ENCODE measurements at regions of chr9 and their contacts with region 1.

Region 1: GRCh38 chr9:127970401-127971313 is 10.1 kb downstream of the EEIG1 start:
- DNase-seq: peak; percentile 89
- H3K4me3 Mint-ChIP-seq: peak overlapping the region; percentile 62
- H3K27ac Mint-ChIP-seq: peak overlapping the region; percentile 88
- H3K4me1 Mint-ChIP-seq: peaks cover 97% of the 10 kb centered on the region
- H3K27me3 Mint-ChIP-seq: no peaks in the 10 kb centered on the region

Region 2: GRCh38 chr9:127916665-127917613 is 53.7 kb before region 1 on chr9 and contains the start of gene ST6GALNAC4:
- CTCF ChIA-PET with region 1: no interaction called
- POLR2A ChIA-PET with region 1: no interaction called
- intact Hi-C with region 1: no loop called
- DNase-seq: peak; percentile 98
- H3K4me3 Mint-ChIP-seq: peak within 1 kb of the TSS; percentile 77
- H3K27ac Mint-ChIP-seq: peak within 1 kb of the TSS; percentile 54
- H3K4me1 Mint-ChIP-seq: peaks cover 43% of the 10 kb centered on the region
- H3K27me3 Mint-ChIP-seq: no peaks in the 10 kb centered on the region
- total RNA-seq, gene ST6GALNAC4: 21.2 to 23.5 TPM

Region 3: DNA sequence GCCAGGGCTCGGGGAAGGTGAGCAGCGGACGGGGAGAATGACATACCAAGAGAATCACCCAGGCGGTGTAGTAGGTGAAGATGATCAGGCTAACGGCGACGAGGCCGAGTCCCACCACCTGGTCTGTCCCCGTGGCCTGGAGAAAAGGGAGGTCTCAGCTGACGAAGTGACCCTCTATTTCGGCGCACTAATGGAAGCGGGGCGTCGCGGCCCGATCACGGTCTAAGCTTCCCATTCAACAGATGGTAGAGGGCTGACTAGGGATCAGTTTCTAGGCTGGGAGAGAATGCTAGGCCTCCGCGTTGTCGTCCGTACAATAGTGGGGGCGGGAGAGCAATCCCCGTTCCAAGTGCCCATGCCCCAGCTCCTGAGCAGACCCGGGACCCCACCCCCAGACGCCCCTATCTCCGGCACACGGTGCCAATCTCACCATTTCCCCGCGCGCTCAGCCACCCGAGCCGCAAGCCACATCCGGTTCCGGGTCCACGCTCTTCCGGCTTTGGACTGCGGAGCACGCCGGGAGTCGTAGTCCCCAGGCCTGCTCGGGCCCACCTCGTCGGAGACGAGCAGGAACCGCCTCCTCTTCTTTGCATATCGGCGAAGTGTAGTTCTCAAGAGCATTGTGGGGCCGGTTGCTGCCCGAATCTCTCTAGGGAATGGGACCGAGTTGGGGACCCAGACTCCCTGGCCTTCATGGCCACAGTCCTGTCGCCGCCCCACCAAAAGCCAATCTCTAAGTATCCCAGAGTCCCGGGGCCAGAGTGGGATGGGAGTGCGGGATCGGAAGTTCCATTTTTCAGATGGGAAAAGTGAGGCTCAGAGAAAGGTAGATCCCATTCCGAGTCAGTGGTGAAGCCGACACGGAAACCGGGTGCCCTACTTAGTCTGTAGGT is 33.0 kb before region 1 on chr9 and contains the start of gene DPM2:
- CTCF ChIA-PET with region 1: interaction called, 106 read pairs
- POLR2A ChIA-PET with region 1: no interaction called
- intact Hi-C with region 1: loop called (anchors 2 kb)
- DNase-seq: peak; percentile 91
- H3K4me3 Mint-ChIP-seq: peak within 1 kb of the TSS; percentile 90
- H3K27ac Mint-ChIP-seq: peak within 1 kb of the TSS; percentile 89
- H3K4me1 Mint-ChIP-seq: peaks cover 43% of the 10 kb centered on the region
- H3K27me3 Mint-ChIP-seq: no peaks in the 10 kb centered on the region
- total RNA-seq, gene DPM2: 41.5 to 42.0 TPM

Region 4: GRCh38 chr9:127955294-127956035 is 15.2 kb before region 1 on chr9:
- CTCF ChIA-PET with region 1: interaction called, 11 read pairs
- POLR2A ChIA-PET with region 1: interaction called, 31 read pairs
- intact Hi-C with region 1: loop called (anchors 1 kb)
- DNase-seq: peak; percentile 95
- H3K4me3 Mint-ChIP-seq: peak overlapping the region; percentile 30
- H3K27ac Mint-ChIP-seq: peak overlapping the region; percentile 92
- H3K4me1 Mint-ChIP-seq: peaks cover 80% of the 10 kb centered on the region
- H3K27me3 Mint-ChIP-seq: no peaks in the 10 kb centered on the region

Region 5: DNA sequence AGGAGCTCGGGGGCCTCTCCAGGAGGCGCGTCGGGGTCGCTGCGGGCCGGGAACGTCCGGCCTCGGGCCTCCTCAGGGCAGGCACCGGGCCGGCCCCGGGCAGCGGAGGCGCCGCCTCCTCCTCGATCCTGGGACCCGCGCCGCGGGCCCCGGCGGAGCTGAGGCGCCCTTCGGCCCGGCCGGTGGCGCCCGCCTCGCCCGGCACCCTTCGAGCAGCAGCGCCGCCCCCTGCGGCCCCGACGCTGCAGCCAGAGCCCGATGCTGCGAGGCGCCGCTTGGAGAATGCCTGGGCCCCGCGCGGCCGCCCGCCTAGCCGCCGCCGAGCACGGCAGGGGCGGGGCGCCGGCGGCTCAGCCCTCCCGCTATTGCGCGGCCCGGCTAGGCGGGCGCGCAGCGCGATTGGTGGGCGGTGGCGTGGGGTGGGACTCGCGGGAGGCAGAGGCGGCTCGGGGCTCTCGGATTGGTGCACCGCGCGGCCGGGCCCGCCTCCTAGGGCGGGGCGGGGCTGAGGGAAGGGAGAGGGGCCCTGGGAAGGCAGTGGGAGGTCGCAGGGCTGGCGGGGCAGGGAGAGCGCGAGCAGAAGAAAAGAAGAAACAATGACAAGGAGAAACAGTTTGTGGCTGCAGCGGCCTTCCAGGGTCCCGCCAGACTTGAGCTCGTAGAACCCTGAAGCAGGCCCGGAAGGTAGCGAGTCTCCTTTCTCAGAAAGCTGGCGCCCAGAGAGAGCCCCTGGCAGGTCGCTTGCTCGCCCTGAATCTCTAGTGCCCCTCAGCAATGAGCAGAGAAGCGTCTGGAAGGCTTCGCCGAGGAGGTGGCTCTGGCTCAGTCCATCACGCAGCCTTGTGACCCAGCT is 10.3 kb after region 1 on chr9 and contains the start of gene EEIG1:
- CTCF ChIA-PET with region 1: interaction called, 6 read pairs
- POLR2A ChIA-PET with region 1: interaction called, 29 read pairs
- intact Hi-C with region 1: loop called (anchors 1 kb)
- DNase-seq: peak; percentile 98
- H3K4me3 Mint-ChIP-seq: peak within 1 kb of the TSS; percentile 96
- H3K27ac Mint-ChIP-seq: peak within 1 kb of the TSS; percentile 93
- H3K4me1 Mint-ChIP-seq: peaks cover 43% of the 10 kb centered on the region
- H3K27me3 Mint-ChIP-seq: no peaks in the 10 kb centered on the region
- total RNA-seq, gene EEIG1: 50.7 to 58.0 TPM

Region 6: GRCh38 chr9:127991042-127991756 is 20.5 kb after region 1 on chr9:
- CTCF ChIA-PET with region 1: no interaction called
- POLR2A ChIA-PET with region 1: no interaction called
- intact Hi-C with region 1: no loop called
- DNase-seq: no peak
- H3K4me3 Mint-ChIP-seq: no peak overlapping the region
- H3K27ac Mint-ChIP-seq: no peak overlapping the region
- H3K4me1 Mint-ChIP-seq: peaks cover 12% of the 10 kb centered on the region
- H3K27me3 Mint-ChIP-seq: no peaks in the 10 kb centered on the region

Region 7: DNA sequence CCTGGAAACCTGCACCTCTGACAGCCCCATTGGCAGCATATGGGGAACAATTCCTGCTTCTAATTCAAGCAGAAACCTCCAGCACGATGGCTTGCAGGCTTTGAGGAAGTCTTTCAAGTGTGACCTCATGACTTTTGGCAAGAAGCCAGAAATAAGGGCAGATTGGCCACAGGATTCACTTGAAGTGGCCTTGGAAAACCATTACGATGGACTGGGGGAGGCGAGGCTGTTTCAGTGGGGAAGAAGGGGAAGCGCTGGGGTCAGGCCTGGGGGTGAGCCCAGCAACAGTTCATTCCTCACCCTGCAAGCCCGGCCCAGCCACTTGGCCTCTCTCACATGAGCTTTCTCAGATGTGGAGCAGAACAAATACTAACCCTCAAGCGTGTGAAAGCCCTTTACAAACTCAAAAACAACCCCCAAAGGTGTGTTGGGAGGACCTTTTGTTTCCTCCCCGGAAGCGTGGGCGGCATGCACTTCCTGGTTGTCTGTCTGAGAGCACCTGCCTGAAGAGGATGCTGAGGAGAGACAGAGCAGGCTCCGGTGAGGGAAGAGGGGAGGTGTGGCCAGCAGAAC is 37.0 kb after region 1 on chr9:
- CTCF ChIA-PET with region 1: no interaction called
- POLR2A ChIA-PET with region 1: no interaction called
- intact Hi-C with region 1: loop called (anchors 5 kb)
- DNase-seq: peak; percentile 94
- H3K4me3 Mint-ChIP-seq: peak overlapping the region; percentile 80
- H3K27ac Mint-ChIP-seq: peak overlapping the region; percentile 92
- H3K4me1 Mint-ChIP-seq: peaks cover 43% of the 10 kb centered on the region
- H3K27me3 Mint-ChIP-seq: no peaks in the 10 kb centered on the region

Region 8: GRCh38 chr9:128103589-128103962 is 132.9 kb after region 1 on chr9:
- CTCF ChIA-PET with region 1: no interaction called
- POLR2A ChIA-PET with region 1: no interaction called
- intact Hi-C with region 1: no loop called
- DNase-seq: peak; percentile 65
- H3K4me3 Mint-ChIP-seq: no peak overlapping the region
- H3K27ac Mint-ChIP-seq: peak overlapping the region; percentile 38
- H3K4me1 Mint-ChIP-seq: peaks cover 36% of the 10 kb centered on the region
- H3K27me3 Mint-ChIP-seq: no peaks in the 10 kb centered on the region

Measured in activated CD4-positive, alpha-beta memory T cell treated with anti-CD3 and anti-CD28 coated beads for 36 hours (primary cell).